Activated CD4-positive, alpha-beta T cell treated with anti-CD3 and anti-CD28 coated beads for 36 hours (primary cell): ENCODE measurements at regions of chr3 and their contacts with region 1.

Region 1: GRCh38 chr3:113912552-113913236 is 35.1 kb upstream of the ZDHHC23 start:
- DNase-seq: peak; percentile 47
- ATAC-seq: peak; percentile 91
- H3K4me3 Mint-ChIP-seq: peak overlapping the region; percentile 15
- H3K27ac Mint-ChIP-seq: no peak overlapping the region
- H3K4me1 Mint-ChIP-seq: peaks cover 5% of the 10 kb centered on the region
- H3K27me3 Mint-ChIP-seq: no peaks in the 10 kb centered on the region

Region 2: GRCh38 chr3:113838631-113839209 is 74.0 kb before region 1 on chr3 and contains the start of gene GRAMD1C:
- CTCF ChIA-PET with region 1: interaction called, 32 read pairs
- POLR2A ChIA-PET with region 1: interaction called, 3 read pairs
- intact Hi-C with region 1: loop called (anchors 1 to 2 kb)
- DNase-seq: peak; percentile 92
- ATAC-seq: peak; percentile 98
- H3K4me3 Mint-ChIP-seq: peak within 1 kb of the TSS; percentile 73
- H3K27ac Mint-ChIP-seq: no peak within 1 kb of the TSS
- H3K4me1 Mint-ChIP-seq: peaks cover 8% of the 10 kb centered on the region
- H3K27me3 Mint-ChIP-seq: peaks cover 3% of the 10 kb centered on the region
- total RNA-seq, gene GRAMD1C: 0.87 to 0.97 TPM

Region 3: GRCh38 chr3:114171677-114172076 is 259.0 kb after region 1 on chr3:
- CTCF ChIA-PET with region 1: no interaction called
- POLR2A ChIA-PET with region 1: no interaction called
- intact Hi-C with region 1: no loop called
- DNase-seq: no peak
- ATAC-seq: no peak
- H3K4me3 Mint-ChIP-seq: no peak overlapping the region
- H3K27ac Mint-ChIP-seq: no peak overlapping the region
- H3K4me1 Mint-ChIP-seq: no peaks in the 10 kb centered on the region
- H3K27me3 Mint-ChIP-seq: peaks cover 3% of the 10 kb centered on the region